WTC11 (cell line): ENCODE measurements at regions of chr6 and their contacts with region 1.

Region 1: GRCh38 chr6:13217206-13217905 is 111.0 kb downstream of the TBC1D7 start:
- DNase-seq: no peak
- ATAC-seq: no peak
- H3K4me3 Mint-ChIP-seq: no peak overlapping the region
- H3K27ac Mint-ChIP-seq: no peak overlapping the region
- H3K4me1 Mint-ChIP-seq: no peaks in the 10 kb centered on the region
- H3K27me3 Mint-ChIP-seq: no peaks in the 10 kb centered on the region
- CTCF ChIP-seq: no peak

Region 2: GRCh38 chr6:13163161-13163944 is 54.0 kb before region 1 on chr6:
- CTCF ChIA-PET with region 1: no interaction called
- POLR2A ChIA-PET with region 1: no interaction called
- DNase-seq: no peak
- ATAC-seq: no peak
- H3K4me3 Mint-ChIP-seq: no peak overlapping the region
- H3K27ac Mint-ChIP-seq: no peak overlapping the region
- H3K4me1 Mint-ChIP-seq: peaks cover 9% of the 10 kb centered on the region
- H3K27me3 Mint-ChIP-seq: no peaks in the 10 kb centered on the region
- CTCF ChIP-seq: no peak

Region 3: GRCh38 chr6:13186861-13187260 is 30.5 kb before region 1 on chr6:
- CTCF ChIA-PET with region 1: no interaction called
- POLR2A ChIA-PET with region 1: interaction called, 10 read pairs
- DNase-seq: peak; percentile 37
- ATAC-seq: peak; percentile 31; the same call in 1 of the 2 replicates
- H3K4me3 Mint-ChIP-seq: no peak overlapping the region
- H3K27ac Mint-ChIP-seq: no peak overlapping the region
- H3K4me1 Mint-ChIP-seq: peaks cover 19% of the 10 kb centered on the region
- H3K27me3 Mint-ChIP-seq: no peaks in the 10 kb centered on the region
- CTCF ChIP-seq: no peak